Left cardiac atrium (tissue), 4 donors: ENCODE measurements at regions of chr11 and their contacts with region 1.

Region 1: GRCh38 chr11:8688414-8689362 is 6.1 kb downstream of the RPL27A start:
- DNase-seq: peak; percentile 96
- ATAC-seq: peak; percentile 96 to 99

Region 2: GRCh38 chr11:8298801-8299786 is 389.6 kb before region 1 on chr11:
- intact Hi-C with region 1: no loop called
- DNase-seq: no peak
- ATAC-seq: no peak

Region 3: DNA sequence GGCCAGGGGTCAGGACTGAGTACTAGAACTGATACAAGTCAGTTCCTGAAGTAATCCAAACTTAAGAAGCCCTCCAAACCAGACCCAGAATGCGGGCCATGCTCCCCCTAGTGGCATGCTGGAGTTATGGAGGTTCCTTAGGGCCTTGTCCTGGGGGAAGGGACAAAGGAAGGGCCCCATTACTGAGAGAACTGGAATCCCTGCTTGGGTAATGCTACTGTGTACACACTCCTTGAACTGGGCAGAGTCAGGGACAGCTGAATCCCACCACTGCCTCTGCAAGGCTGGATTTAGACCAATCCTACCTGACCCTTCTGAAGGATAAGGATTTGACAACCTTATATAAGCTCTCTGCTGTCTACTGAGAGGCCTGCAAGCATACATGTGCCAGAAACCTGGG is 125.0 kb after region 1 on chr11:
- intact Hi-C with region 1: loop called (anchors 2 to 5 kb)
- DNase-seq: peak; percentile 69
- ATAC-seq: peak; percentile 36 to 59

Region 4: DNA sequence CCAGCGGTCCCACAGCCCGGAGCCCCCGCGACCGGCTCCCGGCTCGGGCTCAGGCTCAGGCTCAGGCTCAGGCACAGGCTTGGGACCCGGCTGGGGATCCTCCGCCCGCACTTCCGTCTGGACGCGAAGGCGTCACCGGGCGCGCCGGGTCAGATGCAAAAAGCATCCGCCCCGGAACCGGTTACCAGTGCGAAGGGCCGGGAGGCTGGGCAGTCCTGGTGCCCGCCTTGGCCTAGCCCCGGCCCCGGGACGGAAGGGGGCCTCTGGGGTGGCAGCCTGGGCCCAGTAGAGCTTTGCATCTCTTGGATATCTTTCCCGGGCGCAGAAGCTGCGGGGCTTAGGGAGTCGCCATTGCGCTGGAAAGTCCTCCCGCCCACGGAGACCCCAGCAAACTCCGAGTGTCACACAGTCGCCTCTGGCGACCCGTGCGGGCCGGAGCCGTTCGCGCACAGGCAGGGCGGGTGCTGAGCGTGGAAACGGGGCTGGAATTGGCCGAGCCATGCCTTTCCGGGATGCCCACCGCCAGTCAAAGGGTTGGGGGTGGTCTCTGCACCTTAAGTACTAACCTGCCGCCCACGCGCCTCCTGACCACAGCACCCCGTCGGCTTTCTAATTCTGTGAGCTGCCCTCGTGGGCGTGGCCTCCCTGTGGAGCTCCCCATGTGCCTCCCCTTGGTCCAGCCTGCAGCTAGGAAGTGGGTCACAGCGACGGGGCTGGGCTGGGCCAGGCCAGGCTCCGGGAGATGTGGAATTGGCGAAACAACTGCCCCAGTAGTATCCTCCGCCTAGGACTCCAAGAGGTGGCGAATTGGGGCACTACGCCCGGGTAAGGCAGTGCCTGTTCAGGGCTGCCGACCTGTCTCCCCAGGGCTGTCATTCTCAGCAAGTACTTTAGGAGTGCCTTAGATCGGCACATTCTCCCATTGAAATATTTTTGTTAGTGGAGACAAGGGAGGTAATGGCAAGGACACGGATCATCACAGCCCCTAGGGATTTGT is 275.9 kb after region 1 on chr11 and contains the start of gene TMEM9B:
- intact Hi-C with region 1: loop called in 1 of 2 experiments (anchors 5 kb)
- DNase-seq: peak; percentile 95
- ATAC-seq: peak; percentile 95 to 98
- total RNA-seq, gene TMEM9B: 35.9 to 45.9 TPM

Region 5: DNA sequence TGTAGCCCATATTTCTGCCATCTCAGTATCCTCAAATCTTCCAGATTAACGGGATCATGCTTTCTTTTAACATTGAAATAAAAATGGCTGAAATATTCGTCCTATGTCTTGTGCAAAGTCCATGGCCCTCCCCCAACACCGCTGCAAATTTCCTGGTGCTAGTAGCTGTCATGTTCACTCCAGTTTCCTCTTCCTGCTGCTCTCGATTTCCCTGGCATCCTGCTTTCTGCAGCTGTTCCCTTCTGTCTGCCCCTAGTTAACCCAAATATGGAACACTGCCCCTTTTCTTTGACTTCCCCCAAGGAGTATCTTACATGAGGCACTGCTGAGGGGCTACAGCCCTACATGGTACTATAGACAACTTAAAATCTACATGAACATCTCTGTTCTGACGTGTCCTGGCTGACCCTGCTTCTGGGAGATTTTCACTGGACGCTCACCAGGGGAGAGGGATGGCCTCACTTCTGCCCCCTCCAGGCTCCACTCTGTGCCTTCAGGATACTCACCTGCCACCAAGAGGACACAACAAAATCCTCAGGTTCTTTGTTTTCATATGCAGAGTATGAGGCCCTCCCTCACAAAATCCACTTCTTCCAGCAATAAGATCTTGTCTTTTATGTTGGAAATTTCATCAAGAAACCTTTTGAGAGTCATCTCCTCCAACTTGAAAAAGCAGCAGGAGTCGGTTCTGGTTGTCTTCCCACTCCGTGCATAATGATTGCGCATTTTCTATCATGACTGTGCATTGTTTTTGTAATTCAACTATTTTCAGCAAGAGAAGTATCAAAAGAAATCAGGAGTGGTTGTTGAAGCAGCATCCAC is 432.2 kb after region 1 on chr11:
- intact Hi-C with region 1: no loop called
- DNase-seq: no peak
- ATAC-seq: no peak